Left ventricle myocardium inferior (tissue), 1 donor: ENCODE measurements at regions of chr3 and their contacts with region 1.

Region 1: DNA sequence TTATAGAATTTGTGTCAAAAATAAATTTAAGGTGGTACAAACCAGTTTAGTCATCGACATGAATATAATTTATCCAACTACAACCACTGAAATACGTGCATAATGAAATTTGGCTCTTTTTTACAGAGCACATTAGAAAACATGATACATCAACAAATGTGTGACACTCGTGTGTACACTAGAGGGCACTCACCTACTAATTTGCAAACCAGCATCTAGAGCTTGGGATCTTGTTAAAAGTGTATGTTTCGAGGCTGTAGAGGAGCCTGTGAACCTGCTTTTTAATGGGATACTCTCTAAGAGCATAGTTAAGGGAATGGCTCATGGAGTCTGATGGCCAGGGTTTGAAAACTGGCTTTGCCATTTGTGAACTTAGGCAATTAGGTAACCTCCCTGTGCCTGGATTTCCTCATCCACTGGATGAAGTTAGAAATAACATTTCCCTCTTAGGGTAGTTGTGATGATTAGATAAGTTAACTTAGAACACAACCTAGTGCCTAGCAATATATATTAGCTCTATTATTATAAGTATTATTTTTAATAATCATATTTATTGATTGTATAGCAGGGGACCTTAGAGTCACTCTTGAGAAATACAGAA is 8.8 kb upstream of the CPOX start:
- DNase-seq: no peak
- H3K4me3 ChIP-seq: no peak overlapping the region
- H3K27ac ChIP-seq: no peak overlapping the region
- H3K4me1 ChIP-seq: no peaks in the 10 kb centered on the region
- H3K27me3 ChIP-seq: no peaks in the 10 kb centered on the region
- CTCF ChIP-seq: peak; percentile 84

Region 2: GRCh38 chr3:98726084-98726483 is 123.9 kb after region 1 on chr3:
- intact Hi-C with region 1: no loop called
- DNase-seq: no peak
- H3K4me3 ChIP-seq: no peak overlapping the region
- H3K27ac ChIP-seq: no peak overlapping the region
- H3K4me1 ChIP-seq: no peaks in the 10 kb centered on the region
- H3K27me3 ChIP-seq: no peaks in the 10 kb centered on the region
- CTCF ChIP-seq: no peak

Region 3: GRCh38 chr3:98798820-98799219 is 196.6 kb after region 1 on chr3:
- intact Hi-C with region 1: loop called (anchors 5 kb)
- DNase-seq: no peak
- H3K4me3 ChIP-seq: no peak overlapping the region
- H3K27ac ChIP-seq: no peak overlapping the region
- H3K4me1 ChIP-seq: no peaks in the 10 kb centered on the region
- H3K27me3 ChIP-seq: no peaks in the 10 kb centered on the region
- CTCF ChIP-seq: peak; percentile 45

Region 4: GRCh38 chr3:98817547-98818041 is 215.4 kb after region 1 on chr3:
- intact Hi-C with region 1: loop called (anchors 1 kb)
- DNase-seq: no peak
- H3K4me3 ChIP-seq: no peak overlapping the region
- H3K27ac ChIP-seq: no peak overlapping the region
- H3K4me1 ChIP-seq: peaks cover 5% of the 10 kb centered on the region
- H3K27me3 ChIP-seq: no peaks in the 10 kb centered on the region
- CTCF ChIP-seq: peak; percentile 88

Region 5: DNA sequence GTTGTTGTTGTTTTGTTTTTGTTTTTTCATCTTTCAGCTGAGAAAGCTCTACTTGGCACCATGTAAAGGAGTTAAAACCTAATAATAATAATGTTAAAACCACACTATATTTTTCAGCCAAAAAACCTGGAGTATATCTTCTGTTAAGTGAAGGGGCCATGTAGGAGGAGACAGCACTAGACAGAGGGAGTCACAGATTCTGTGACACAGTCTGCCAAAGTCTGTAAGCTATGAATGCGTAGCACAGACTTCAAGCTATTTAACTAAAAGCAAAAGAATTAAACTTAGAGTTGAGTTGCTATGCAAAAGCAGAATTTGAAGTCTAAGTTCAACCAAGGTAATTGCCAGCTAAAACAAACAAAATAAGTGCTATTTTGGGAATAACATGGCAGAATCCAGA is 740.2 kb after region 1 on chr3:
- intact Hi-C with region 1: no loop called
- DNase-seq: no peak
- H3K4me3 ChIP-seq: no peak overlapping the region
- H3K27ac ChIP-seq: no peak overlapping the region
- H3K4me1 ChIP-seq: no peaks in the 10 kb centered on the region
- H3K27me3 ChIP-seq: no peaks in the 10 kb centered on the region
- CTCF ChIP-seq: no peak